Mammary epithelial cell (primary cell): ENCODE measurements at regions of chr2 and their contacts with region 1.

Region 1: DNA sequence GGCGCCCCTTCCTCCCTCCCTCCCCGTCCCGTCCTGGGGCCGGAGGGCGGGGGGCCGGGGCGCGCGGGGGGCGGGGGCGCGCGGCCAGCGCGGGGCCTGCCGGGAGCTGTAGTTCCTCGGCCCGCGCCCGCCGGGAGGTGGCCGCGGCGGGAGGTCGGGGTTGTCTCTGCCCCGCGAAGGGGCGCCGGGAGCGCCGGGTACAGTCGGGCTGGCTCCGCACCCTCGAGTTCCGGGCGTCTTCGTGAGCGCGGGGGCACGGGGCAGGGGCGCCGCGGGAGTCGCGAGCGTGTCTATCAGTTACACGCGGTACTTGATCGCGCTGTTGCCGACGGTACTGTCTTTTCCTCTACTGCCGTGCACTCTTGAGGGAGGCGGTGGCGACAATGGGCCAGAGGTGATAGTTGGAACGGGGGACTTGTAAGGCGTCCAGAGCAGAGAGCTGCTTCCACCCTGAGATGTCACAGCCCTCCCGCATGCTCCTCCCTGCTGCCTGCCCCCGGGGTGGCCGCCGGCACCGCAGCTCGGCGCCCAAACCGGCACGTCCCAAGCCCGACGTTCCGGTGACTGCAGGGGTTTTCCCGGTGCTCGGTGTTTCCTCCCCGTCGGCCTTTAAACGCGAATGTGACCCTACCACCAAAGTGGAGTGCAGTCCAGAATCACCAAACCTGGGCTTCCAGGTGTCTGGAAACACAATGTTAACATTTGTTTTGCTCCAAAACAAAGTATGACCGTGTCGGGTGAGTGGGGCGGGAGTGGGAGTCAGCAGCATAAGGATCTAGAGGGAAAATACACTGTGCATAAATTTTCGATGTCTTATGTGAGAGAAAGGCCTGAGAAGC is at the start of gene PRKD3:
- DNase-seq: peak; percentile 60
- H3K4me3 ChIP-seq: peak within 1 kb of the TSS; percentile 69 to 91 (median 90)
- H3K27ac ChIP-seq: peak within 1 kb of the TSS; percentile 64
- H3K4me1 ChIP-seq: peaks cover 34% of the 10 kb centered on the region
- H3K27me3 ChIP-seq: no peaks in the 10 kb centered on the region
- CTCF ChIP-seq: no peak
- total RNA-seq, gene PRKD3: 43.0 to 43.3 TPM

Region 2: DNA sequence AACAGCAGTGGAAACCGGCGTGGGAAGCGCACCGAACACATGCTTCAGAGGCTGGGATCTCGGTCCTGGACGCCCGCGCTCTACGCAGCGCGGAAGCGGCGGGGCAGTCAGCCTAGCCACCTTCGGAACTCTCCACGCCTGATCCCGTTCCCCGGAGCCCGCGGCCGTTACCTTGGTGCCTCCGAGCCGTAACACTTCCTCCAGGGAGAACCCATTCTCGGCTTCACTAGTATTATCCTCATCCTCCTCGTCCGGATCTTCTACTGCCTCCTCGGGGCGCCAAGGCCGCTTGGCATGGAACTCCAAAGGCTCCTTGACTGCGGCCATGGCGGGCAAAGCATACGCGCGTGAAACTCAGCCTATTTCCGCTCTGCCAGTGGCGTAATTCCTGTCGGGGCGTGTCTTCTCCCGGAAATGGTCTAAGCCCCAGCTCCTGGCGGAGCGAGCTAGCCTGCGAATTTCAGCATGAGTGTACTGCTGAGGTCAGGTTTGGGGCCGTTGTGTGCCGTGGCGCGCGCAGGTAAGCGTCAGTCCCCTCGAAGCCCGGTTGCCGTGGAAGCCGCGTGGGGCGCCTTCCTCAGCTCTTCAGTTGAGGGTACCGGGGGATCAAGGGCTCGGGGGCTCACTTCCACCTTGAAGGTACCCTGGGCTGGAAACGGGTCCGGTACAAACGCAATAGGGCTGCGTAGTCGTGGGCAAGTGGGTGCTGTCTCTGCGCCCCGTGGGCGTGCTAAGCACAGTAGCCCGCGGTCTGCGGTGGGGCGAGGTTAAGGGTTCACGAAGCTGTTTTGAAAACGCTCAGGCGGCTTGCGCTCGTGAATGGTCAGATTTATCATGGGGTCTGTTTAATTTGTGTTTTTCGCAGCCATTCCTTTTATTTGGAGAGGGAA is 93.5 kb before region 1 on chr2 and contains the starts of genes CEBPZ and NDUFAF7:
- CTCF ChIA-PET with region 1: no interaction called
- dilution Hi-C with region 1: no loop called
- in situ Hi-C with region 1: no loop called
- intact Hi-C with region 1: loop called (anchors 2 kb)
- DNase-seq: peak; percentile 94
- H3K4me3 ChIP-seq: peak within 1 kb of the TSS; percentile 80 to 95 (median 87)
- H3K27ac ChIP-seq: peak within 1 kb of the TSS; percentile 81
- H3K4me1 ChIP-seq: peaks cover 13% of the 10 kb centered on the region
- H3K27me3 ChIP-seq: no peaks in the 10 kb centered on the region
- CTCF ChIP-seq: no peak
- total RNA-seq, gene CEBPZ: 30.2 to 58.7 TPM
- total RNA-seq, gene NDUFAF7: 9.3 to 16.5 TPM

Region 3: DNA sequence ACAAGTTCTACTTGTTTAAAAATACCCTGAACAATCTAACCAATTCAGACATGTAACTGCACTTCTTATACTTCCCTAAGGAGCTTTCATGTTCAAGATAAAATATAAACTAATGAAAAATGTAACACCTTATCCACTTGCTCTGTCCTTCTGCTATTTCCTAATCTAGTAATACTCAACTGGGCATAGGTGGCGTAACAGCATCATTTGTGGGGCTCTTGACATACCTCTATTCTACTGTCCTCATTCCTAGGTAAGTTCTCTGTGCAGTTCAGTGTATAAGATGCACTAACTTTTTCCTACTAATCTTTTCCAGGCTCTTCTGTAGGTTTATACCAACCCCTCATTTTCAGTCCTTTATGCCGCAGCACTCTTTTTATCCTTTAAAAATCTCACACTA is 37.0 kb before region 1 on chr2:
- CTCF ChIA-PET with region 1: no interaction called
- dilution Hi-C with region 1: no loop called
- in situ Hi-C with region 1: no loop called
- intact Hi-C with region 1: loop called (anchors 5 kb)
- DNase-seq: no peak
- H3K4me3 ChIP-seq: no peak overlapping the region
- H3K27ac ChIP-seq: no peak overlapping the region
- H3K4me1 ChIP-seq: no peaks in the 10 kb centered on the region
- H3K27me3 ChIP-seq: no peaks in the 10 kb centered on the region
- CTCF ChIP-seq: peak; percentile 33 to 41